Activated CD4-positive, alpha-beta T cell treated with anti-CD3 and anti-CD28 coated beads for 36 hours (primary cell): ENCODE measurements at regions of chr3 and their contacts with region 1.

Region 1: GRCh38 chr3:184804801-184805200 is 7.2 kb upstream of the VPS8 start:
- DNase-seq: no peak
- ATAC-seq: no peak
- H3K4me3 Mint-ChIP-seq: no peak overlapping the region
- H3K27ac Mint-ChIP-seq: no peak overlapping the region
- H3K4me1 Mint-ChIP-seq: no peaks in the 10 kb centered on the region
- H3K27me3 Mint-ChIP-seq: peaks cover 10% of the 10 kb centered on the region

Region 2: GRCh38 chr3:184786280-184786941 is 18.4 kb before region 1 on chr3:
- CTCF ChIA-PET with region 1: interaction called, 13 read pairs
- POLR2A ChIA-PET with region 1: no interaction called
- intact Hi-C with region 1: no loop called
- DNase-seq: peak; percentile 49
- ATAC-seq: peak; percentile 66
- H3K4me3 Mint-ChIP-seq: no peak overlapping the region
- H3K27ac Mint-ChIP-seq: no peak overlapping the region
- H3K4me1 Mint-ChIP-seq: peaks cover 26% of the 10 kb centered on the region
- H3K27me3 Mint-ChIP-seq: peaks cover 6% of the 10 kb centered on the region